H1 (cell line): ENCODE measurements at regions of chr11 and their contacts with region 1.

Region 1: GRCh38 chr11:128624269-128625175 is 37.2 kb upstream of the ETS1 start:
- DNase-seq: peak in 1 of 2 experiments; percentile 43
- H3K4me3 ChIP-seq: no peak overlapping the region
- H3K27ac ChIP-seq: no peak overlapping the region
- H3K4me1 ChIP-seq: peaks cover 2 to 8% (median 3%) of the 10 kb centered on the region in 4 experiments; a peak in 6 of 7 replicates
- H3K27me3 ChIP-seq: peaks cover 0 to 3% (median 0%) of the 10 kb centered on the region in 4 experiments; a peak in 4 of 7 replicates
- CTCF ChIP-seq: no peak
- EP300 ChIP-seq: no peak
- POLR2A ChIP-seq: no peak
- RAD21 ChIP-seq: no peak

Region 2: DNA sequence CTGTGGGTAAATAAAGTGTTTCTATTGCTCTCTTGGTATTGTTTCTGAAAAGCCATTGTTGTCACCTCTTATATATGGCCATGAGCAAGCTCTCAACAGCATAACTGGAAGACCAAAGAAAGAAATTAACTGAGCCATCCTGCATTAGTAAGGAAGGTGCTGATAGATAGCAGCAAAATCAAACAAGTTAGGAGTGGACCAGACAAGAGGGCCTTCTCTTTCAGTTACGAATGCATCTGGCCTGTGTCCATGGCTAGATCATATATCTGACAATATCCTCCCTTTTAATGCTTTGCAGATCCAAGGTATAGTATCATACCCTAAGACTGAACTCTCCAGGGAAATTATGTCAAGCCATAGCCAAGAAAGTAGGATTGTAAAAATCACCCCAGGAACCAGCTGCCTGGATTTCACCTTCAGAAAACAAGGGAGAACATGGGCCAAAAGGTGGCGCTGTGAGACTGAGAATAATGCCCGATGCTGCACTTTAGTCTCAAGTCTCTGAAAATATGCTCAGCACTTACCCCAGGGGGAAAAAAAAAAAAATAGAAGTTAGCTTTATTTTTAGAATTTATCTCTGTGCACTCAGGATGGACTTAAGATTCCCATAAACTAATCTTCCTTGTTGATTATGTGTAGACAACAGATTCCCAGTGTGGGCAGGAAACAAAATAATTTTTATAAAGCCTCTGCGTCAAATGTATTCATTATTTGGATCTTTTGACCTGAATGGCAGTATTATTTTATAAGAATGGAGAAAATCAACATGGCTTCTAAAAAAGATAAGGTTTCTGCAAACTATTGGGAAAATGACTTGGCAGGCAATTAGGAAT is 452.3 kb before region 1 on chr11:
- CTCF ChIA-PET with region 1: interaction called, 94 read pairs
- POLR2A ChIA-PET with region 1: no interaction called
- DNase-seq: peak in 1 of 2 experiments; percentile 85
- H3K4me3 ChIP-seq: no peak overlapping the region
- H3K27ac ChIP-seq: no peak overlapping the region
- H3K4me1 ChIP-seq: peaks cover 2 to 6% (median 3%) of the 10 kb centered on the region in 4 experiments; a peak in 6 of 7 replicates
- H3K27me3 ChIP-seq: no peaks in the 10 kb centered on the region; a peak in 1 of 7 replicates
- CTCF ChIP-seq: peak; percentile 53 to 82 (median 70)
- EP300 ChIP-seq: no peak
- POLR2A ChIP-seq: no peak
- RAD21 ChIP-seq: peak; percentile 90 to 93

Region 3: DNA sequence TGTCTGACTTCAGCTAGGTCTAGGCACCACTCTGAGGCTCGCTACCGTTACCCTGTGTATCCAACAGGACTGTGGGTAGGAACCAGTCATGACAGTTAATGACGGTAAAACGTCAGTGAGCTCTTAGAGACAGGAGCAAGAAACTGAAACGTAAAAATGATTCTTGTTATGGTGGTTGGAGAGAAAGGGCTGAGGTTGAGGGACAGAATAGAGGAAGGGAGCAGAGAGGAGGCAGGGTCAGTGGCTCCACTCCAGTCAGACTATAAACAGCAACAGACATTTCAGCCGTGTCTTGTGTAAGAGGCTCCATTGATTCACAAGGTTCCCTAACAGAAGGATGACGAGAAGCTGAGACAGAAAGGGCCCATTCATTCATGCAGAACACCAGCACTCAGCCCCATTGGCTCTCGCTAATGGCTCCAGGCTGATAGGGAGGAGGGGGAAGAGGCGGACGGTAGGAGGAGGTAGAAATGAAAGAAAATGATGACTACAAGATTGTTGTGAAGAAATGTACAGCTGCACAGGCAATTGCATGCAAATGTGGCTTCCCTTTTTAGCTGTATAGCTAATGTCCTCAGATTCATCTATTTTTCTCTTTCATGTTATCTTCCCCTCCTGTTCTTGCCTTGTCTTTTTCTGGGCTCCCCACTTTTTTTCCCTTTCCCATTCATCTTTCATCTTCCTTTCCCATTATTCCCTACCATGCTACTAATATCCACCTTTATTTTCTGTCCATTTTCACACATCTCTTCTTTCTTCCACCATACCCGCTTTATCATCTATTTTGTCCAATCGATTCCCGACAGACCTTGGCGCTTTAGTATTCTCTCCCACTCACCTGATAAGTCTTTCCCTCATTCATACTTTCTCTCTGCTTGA is 71.5 kb before region 1 on chr11:
- CTCF ChIA-PET with region 1: interaction called, 102 read pairs
- POLR2A ChIA-PET with region 1: no interaction called
- DNase-seq: no peak
- H3K4me3 ChIP-seq: no peak overlapping the region
- H3K27ac ChIP-seq: no peak overlapping the region
- H3K4me1 ChIP-seq: peaks cover 7 to 16% (median 10%) of the 10 kb centered on the region in 4 experiments; a peak in 6 of 7 replicates
- H3K27me3 ChIP-seq: peaks cover 8 to 54% (median 44%) of the 10 kb centered on the region in 4 experiments
- CTCF ChIP-seq: no peak
- EP300 ChIP-seq: no peak
- POLR2A ChIP-seq: no peak
- RAD21 ChIP-seq: no peak

Region 4: DNA sequence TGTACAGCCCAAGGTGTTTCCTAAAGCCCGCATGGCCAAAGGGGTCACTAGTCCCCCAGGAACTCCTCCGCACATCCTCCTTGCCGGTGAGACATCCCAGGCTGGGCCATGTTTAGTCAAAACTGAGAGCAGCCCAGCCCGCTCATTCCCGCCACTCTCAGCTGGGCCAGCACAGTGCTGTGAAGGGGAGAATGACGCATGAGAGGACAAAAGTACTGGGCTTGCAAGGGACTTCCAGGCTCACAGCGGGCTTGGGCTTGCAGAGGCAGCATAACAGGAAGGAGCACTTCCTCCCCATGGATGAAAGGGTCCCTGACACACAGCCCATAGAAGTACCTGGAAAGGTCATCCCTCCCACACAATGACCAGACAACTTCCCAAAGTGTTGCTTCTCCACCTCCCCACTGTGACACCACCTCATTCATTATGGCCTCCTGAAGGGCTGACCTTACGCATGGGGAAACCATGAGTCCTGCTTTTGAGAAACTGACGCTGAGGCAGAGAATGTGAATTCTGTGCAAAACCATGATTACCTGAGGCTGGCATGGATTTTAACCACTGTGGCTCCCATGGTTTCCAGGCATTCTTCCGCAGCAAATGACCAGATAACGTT is 56.2 kb before region 1 on chr11:
- CTCF ChIA-PET with region 1: no interaction called
- POLR2A ChIA-PET with region 1: no interaction called
- DNase-seq: no peak
- H3K4me3 ChIP-seq: no peak overlapping the region
- H3K27ac ChIP-seq: no peak overlapping the region
- H3K4me1 ChIP-seq: peaks cover 0 to 9% (median 1%) of the 10 kb centered on the region in 4 experiments; a peak in 4 of 7 replicates
- H3K27me3 ChIP-seq: no peaks in the 10 kb centered on the region
- CTCF ChIP-seq: no peak
- EP300 ChIP-seq: no peak
- POLR2A ChIP-seq: no peak
- RAD21 ChIP-seq: no peak